Caco-2 (cell line): ENCODE measurements at regions of chr2 and their contacts with region 1.

Region 1: DNA sequence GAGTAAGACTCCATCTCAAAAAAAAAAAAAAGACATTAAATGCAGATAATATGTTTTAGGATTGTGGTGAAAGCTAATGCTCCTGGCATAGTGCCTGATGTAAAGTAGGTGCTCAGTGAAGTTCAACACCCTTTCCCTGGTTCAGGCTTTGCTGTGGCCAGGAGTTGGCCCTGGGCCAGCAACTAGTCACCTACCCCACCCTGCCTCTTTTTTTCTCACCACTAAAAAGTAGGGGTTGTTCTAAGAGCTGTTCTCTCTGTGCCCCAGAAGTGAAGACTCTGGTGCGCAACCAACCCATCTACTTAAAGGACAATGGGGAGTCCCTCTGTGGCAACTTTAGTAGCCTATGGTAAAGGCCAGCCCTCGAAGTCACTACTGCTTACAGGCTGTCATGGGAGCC is 75.9 kb downstream of the DNMT3A start:
- DNase-seq: no peak
- H3K4me3 ChIP-seq: no peak overlapping the region
- H3K4me3 Mint-ChIP-seq: no peak overlapping the region
- H3K27ac Mint-ChIP-seq: no peak overlapping the region
- H3K4me1 ChIP-seq: no peaks in the 10 kb centered on the region
- H3K4me1 Mint-ChIP-seq: no peaks in the 10 kb centered on the region
- H3K27me3 ChIP-seq: no peaks in the 10 kb centered on the region
- H3K27me3 Mint-ChIP-seq: no peaks in the 10 kb centered on the region
- CTCF ChIP-seq: no peak

Region 2: GRCh38 chr2:25252281-25253105 is 13.3 kb before region 1 on chr2:
- CTCF ChIA-PET with region 1: no interaction called
- POLR2A ChIA-PET with region 1: interaction called, 12 read pairs
- intact Hi-C with region 1: no loop called
- DNase-seq: peak; percentile 90 to 93
- H3K4me3 ChIP-seq: peak overlapping the region; percentile 89
- H3K4me3 Mint-ChIP-seq: peak overlapping the region; percentile 83
- H3K27ac Mint-ChIP-seq: peak overlapping the region; percentile 81
- H3K4me1 ChIP-seq: peaks cover 31% of the 10 kb centered on the region
- H3K4me1 Mint-ChIP-seq: peaks cover 27% of the 10 kb centered on the region
- H3K27me3 ChIP-seq: no peaks in the 10 kb centered on the region; the same call in 1 of the 2 replicates
- H3K27me3 Mint-ChIP-seq: peaks cover 13% of the 10 kb centered on the region
- CTCF ChIP-seq: no peak